ENCODE measurements at regions of chr6 and their contacts with region 1.

Region 1: GRCh38 chr6:118980063-118980462 is 45.1 kb upstream of the MCM9 start:
- DNase-seq: no peak
- ATAC-seq: no peak
- H3K4me3 ChIP-seq: no peak overlapping the region
- H3K4me3 Mint-ChIP-seq: no peak overlapping the region
- H3K27ac ChIP-seq: no peak overlapping the region
- H3K27ac Mint-ChIP-seq: peak overlapping the region in 1 of 9 donors; percentile 2
- H3K4me1 ChIP-seq: no peaks in the 10 kb centered on the region
- H3K4me1 Mint-ChIP-seq: peaks cover 0 to 8% (median 0%) of the 10 kb centered on the region in 7 donors
- H3K27me3 ChIP-seq: no peaks in the 10 kb centered on the region
- H3K27me3 Mint-ChIP-seq: no peaks in the 10 kb centered on the region

Region 2: GRCh38 chr6:118542184-118542952 is 437.7 kb before region 1 on chr6:
- CTCF ChIA-PET with region 1: no interaction called
- POLR2A ChIA-PET with region 1: no interaction called
- intact Hi-C with region 1: no loop called
- DNase-seq: no peak
- ATAC-seq: no peak
- H3K4me3 ChIP-seq: no peak overlapping the region
- H3K4me3 Mint-ChIP-seq: peak overlapping the region in 1 of 10 donors; percentile 41
- H3K27ac ChIP-seq: no peak overlapping the region
- H3K27ac Mint-ChIP-seq: peak overlapping the region in 3 of 9 donors; percentile 8 to 68 (median 60)
- H3K4me1 ChIP-seq: peaks cover 0 to 8% of the 10 kb centered on the region in 2 donors
- H3K4me1 Mint-ChIP-seq: peaks cover 10 to 82% (median 67%) of the 10 kb centered on the region in 7 donors
- H3K27me3 ChIP-seq: no peaks in the 10 kb centered on the region
- H3K27me3 Mint-ChIP-seq: no peaks in the 10 kb centered on the region

Region 3: GRCh38 chr6:118940748-118941147 is 39.3 kb before region 1 on chr6:
- CTCF ChIA-PET with region 1: no interaction called
- POLR2A ChIA-PET with region 1: no interaction called
- intact Hi-C with region 1: no loop called
- DNase-seq: no peak
- ATAC-seq: no peak
- H3K4me3 ChIP-seq: no peak overlapping the region
- H3K4me3 Mint-ChIP-seq: no peak overlapping the region
- H3K27ac ChIP-seq: no peak overlapping the region
- H3K27ac Mint-ChIP-seq: no peak overlapping the region
- H3K4me1 ChIP-seq: no peaks in the 10 kb centered on the region
- H3K4me1 Mint-ChIP-seq: peaks cover 3 to 15% (median 12%) of the 10 kb centered on the region in 7 donors
- H3K27me3 ChIP-seq: no peaks in the 10 kb centered on the region
- H3K27me3 Mint-ChIP-seq: peaks cover 0 to 11% (median 0%) of the 10 kb centered on the region in 5 donors

Region 4: DNA sequence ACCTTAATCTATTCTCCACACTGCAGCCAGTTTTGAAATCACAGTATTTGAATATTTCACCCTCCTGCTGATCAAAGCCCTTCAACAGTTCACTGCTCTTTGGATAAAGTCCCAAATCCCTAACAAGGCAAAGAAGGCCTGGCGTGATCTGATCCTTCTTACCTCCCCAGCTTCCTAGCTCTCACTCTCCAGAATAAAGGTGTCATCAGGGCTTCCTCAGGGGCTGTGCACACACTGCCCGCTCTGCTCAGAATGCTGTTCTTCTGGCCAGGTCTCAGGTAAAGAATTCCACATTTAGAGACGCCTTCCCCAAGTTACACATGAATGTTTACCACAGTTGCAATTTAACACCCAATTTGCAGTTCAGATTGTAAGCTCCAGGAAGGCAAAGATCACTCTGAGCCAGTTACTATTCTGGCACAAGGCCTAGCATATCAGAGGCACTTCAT is 13.8 kb after region 1 on chr6:
- CTCF ChIA-PET with region 1: no interaction called
- POLR2A ChIA-PET with region 1: no interaction called
- intact Hi-C with region 1: loop called in 1 of 2 experiments (anchors 2 kb)
- DNase-seq: no peak
- ATAC-seq: no peak
- H3K4me3 ChIP-seq: no peak overlapping the region
- H3K4me3 Mint-ChIP-seq: no peak overlapping the region
- H3K27ac ChIP-seq: no peak overlapping the region
- H3K27ac Mint-ChIP-seq: no peak overlapping the region
- H3K4me1 ChIP-seq: no peaks in the 10 kb centered on the region
- H3K4me1 Mint-ChIP-seq: peaks cover 4 to 12% (median 11%) of the 10 kb centered on the region in 7 donors
- H3K27me3 ChIP-seq: no peaks in the 10 kb centered on the region
- H3K27me3 Mint-ChIP-seq: no peaks in the 10 kb centered on the region

Region 5: GRCh38 chr6:119012521-119012920 is 32.5 kb after region 1 on chr6:
- CTCF ChIA-PET with region 1: no interaction called
- POLR2A ChIA-PET with region 1: no interaction called
- intact Hi-C with region 1: no loop called
- DNase-seq: no peak
- ATAC-seq: no peak
- H3K4me3 ChIP-seq: no peak overlapping the region
- H3K4me3 Mint-ChIP-seq: no peak overlapping the region
- H3K27ac ChIP-seq: no peak overlapping the region
- H3K27ac Mint-ChIP-seq: no peak overlapping the region
- H3K4me1 ChIP-seq: no peaks in the 10 kb centered on the region
- H3K4me1 Mint-ChIP-seq: peaks cover 0 to 1% (median 0%) of the 10 kb centered on the region in 7 donors
- H3K27me3 ChIP-seq: no peaks in the 10 kb centered on the region
- H3K27me3 Mint-ChIP-seq: no peaks in the 10 kb centered on the region

Measured in naive thymus-derived CD4-positive, alpha-beta T cell (primary cell).